OCI-LY7 (cell line): ENCODE measurements at regions of chr1 and their contacts with region 1.

Region 1: GRCh38 chr1:61851849-61852669 is 109.8 kb downstream of the PATJ start:
- DNase-seq: peak; percentile 69
- H3K4me3 ChIP-seq: no peak overlapping the region
- H3K27ac ChIP-seq: no peak overlapping the region
- H3K4me1 ChIP-seq: no peaks in the 10 kb centered on the region
- CTCF ChIP-seq: peak; percentile 95

Region 2: GRCh38 chr1:60848583-60849188 is 1003.4 kb before region 1 on chr1:
- CTCF ChIA-PET with region 1: no interaction called
- POLR2A ChIA-PET with region 1: no interaction called
- intact Hi-C with region 1: loop called (anchors 1 kb)
- DNase-seq: peak; percentile 22
- H3K4me3 ChIP-seq: no peak overlapping the region
- H3K27ac ChIP-seq: no peak overlapping the region
- H3K4me1 ChIP-seq: no peaks in the 10 kb centered on the region
- CTCF ChIP-seq: peak; percentile 80

Region 3: GRCh38 chr1:61049850-61050540 is 802.1 kb before region 1 on chr1:
- CTCF ChIA-PET with region 1: no interaction called
- POLR2A ChIA-PET with region 1: no interaction called
- intact Hi-C with region 1: loop called (anchors 5 kb)
- DNase-seq: peak; percentile 81
- H3K4me3 ChIP-seq: peak overlapping the region; percentile 71
- H3K27ac ChIP-seq: no peak overlapping the region
- H3K4me1 ChIP-seq: peaks cover 10% of the 10 kb centered on the region
- CTCF ChIP-seq: peak; percentile 94

Region 4: DNA sequence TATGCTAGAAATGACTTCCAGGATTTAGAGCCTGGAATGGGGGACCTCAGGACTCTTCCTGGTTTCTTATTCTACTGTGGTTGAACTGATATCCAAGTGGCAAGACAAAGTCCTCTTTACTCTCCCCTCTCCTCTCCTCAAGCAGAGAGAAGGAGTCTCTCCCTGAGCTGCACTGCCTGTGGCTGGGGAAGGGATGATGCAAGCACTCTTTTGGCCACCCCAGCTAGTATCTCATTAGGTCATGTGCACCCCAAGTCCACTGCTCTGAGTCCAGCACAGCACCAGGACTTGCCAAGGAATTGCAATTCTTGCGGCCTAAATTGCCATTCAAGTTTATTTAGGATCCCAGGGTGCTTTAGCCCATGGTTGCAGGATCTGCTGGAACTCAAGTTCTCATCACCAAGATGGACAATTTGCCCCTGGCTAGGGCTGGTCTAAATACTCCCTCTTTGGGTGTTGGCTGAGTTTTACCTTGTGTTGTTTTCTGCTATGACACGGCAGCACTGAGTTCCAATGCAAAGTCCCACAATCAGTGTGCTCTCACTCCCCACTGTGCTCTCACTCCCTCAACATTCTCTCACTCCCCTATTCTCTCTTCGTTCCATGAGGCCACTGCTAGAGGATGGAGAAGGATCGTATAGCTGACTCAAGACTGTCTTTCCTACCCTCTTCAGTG is 299.3 kb before region 1 on chr1:
- CTCF ChIA-PET with region 1: no interaction called
- POLR2A ChIA-PET with region 1: no interaction called
- intact Hi-C with region 1: loop called (anchors 1 kb)
- DNase-seq: no peak
- H3K4me3 ChIP-seq: no peak overlapping the region
- H3K27ac ChIP-seq: no peak overlapping the region
- H3K4me1 ChIP-seq: no peaks in the 10 kb centered on the region
- CTCF ChIP-seq: no peak

Region 5: DNA sequence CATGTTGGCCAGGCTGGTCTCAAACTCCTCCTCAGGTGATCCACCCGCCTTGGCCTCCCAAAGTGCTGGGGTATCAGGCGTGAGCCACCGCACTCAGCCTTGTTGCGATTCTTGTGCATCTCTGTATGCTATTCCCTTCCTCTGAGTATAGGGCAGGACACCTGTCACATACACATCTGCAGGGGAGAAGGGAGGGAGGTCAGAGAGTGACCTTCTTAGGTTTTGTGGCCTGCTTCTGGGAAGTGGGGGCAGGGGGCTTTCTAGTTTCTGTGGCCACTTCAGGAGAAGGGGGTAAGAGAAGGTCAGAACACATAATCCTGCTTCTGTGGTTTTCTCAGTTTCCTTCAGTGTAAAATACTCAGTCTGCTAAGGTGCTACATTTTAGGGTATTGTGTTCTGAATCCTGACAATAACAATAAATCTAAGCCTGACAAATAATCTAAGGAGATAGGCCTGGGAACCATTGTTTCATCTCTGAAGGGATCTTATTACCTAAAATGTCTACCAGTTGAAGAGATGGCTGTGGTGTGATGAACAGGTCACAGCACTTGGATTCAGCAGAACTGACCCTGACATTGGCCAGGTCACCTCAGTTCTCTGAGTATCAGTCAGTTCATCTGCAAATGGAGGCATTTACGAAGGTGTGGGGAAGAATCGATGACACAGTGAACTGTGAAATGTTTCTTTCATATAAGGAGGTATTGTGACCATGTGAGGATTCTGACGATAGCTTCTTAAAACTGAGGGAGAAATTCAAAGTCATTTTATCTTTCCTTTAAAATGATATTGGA is 130.0 kb after region 1 on chr1:
- CTCF ChIA-PET with region 1: no interaction called
- POLR2A ChIA-PET with region 1: no interaction called
- intact Hi-C with region 1: no loop called
- DNase-seq: no peak
- H3K4me3 ChIP-seq: no peak overlapping the region
- H3K27ac ChIP-seq: no peak overlapping the region
- H3K4me1 ChIP-seq: no peaks in the 10 kb centered on the region
- CTCF ChIP-seq: no peak